CD8-positive, alpha-beta T cell (primary cell): ENCODE measurements at regions of chr2 and their contacts with region 1.

Region 1: GRCh38 chr2:117323331-117323730 is 491.2 kb upstream of the DDX18 start:
- DNase-seq: no peak
- ATAC-seq: no peak
- H3K4me3 ChIP-seq: no peak overlapping the region
- H3K4me3 Mint-ChIP-seq: no peak overlapping the region
- H3K27ac ChIP-seq: no peak overlapping the region
- H3K27ac Mint-ChIP-seq: no peak overlapping the region
- H3K4me1 ChIP-seq: no peaks in the 10 kb centered on the region
- H3K4me1 Mint-ChIP-seq: no peaks in the 10 kb centered on the region
- H3K27me3 ChIP-seq: no peaks in the 10 kb centered on the region
- H3K27me3 Mint-ChIP-seq: no peaks in the 10 kb centered on the region
- CTCF ChIP-seq: no peak

Region 2: GRCh38 chr2:117128461-117128860 is 194.9 kb before region 1 on chr2:
- CTCF ChIA-PET with region 1: no interaction called
- POLR2A ChIA-PET with region 1: no interaction called
- intact Hi-C with region 1: loop called in 1 of 2 experiments (anchors 5 kb)
- DNase-seq: no peak
- ATAC-seq: no peak
- H3K4me3 ChIP-seq: no peak overlapping the region
- H3K4me3 Mint-ChIP-seq: no peak overlapping the region
- H3K27ac ChIP-seq: no peak overlapping the region
- H3K27ac Mint-ChIP-seq: no peak overlapping the region
- H3K4me1 ChIP-seq: no peaks in the 10 kb centered on the region
- H3K4me1 Mint-ChIP-seq: no peaks in the 10 kb centered on the region
- H3K27me3 ChIP-seq: no peaks in the 10 kb centered on the region
- H3K27me3 Mint-ChIP-seq: no peaks in the 10 kb centered on the region
- CTCF ChIP-seq: no peak